SK-N-SH (cell line): ENCODE measurements at regions of chr9 and their contacts with region 1.

Region 1: GRCh38 chr9:126965541-126966428 is 51.2 kb downstream of the RALGPS1 start:
- DNase-seq: peak; percentile 73
- H3K4me3 ChIP-seq: no peak overlapping the region
- H3K27ac ChIP-seq: no peak overlapping the region
- H3K4me1 ChIP-seq: no peaks in the 10 kb centered on the region
- H3K27me3 ChIP-seq: no peaks in the 10 kb centered on the region
- CTCF ChIP-seq: peak; percentile 94
- EP300 ChIP-seq: no peak
- RAD21 ChIP-seq: peak; percentile 98

Region 2: GRCh38 chr9:126874546-126875311 is 91.1 kb before region 1 on chr9:
- CTCF ChIA-PET with region 1: no interaction called
- POLR2A ChIA-PET with region 1: no interaction called
- DNase-seq: no peak
- H3K4me3 ChIP-seq: no peak overlapping the region
- H3K27ac ChIP-seq: no peak overlapping the region
- H3K4me1 ChIP-seq: no peaks in the 10 kb centered on the region; a peak in 1 of 4 replicates
- H3K27me3 ChIP-seq: no peaks in the 10 kb centered on the region
- CTCF ChIP-seq: no peak
- EP300 ChIP-seq: no peak
- RAD21 ChIP-seq: no peak

Region 3: GRCh38 chr9:127130661-127131538 is 165.1 kb after region 1 on chr9:
- CTCF ChIA-PET with region 1: interaction called, 10 read pairs
- POLR2A ChIA-PET with region 1: no interaction called
- DNase-seq: peak; percentile 71
- H3K4me3 ChIP-seq: no peak overlapping the region
- H3K27ac ChIP-seq: peak overlapping the region in 1 of 2 experiments; percentile 58; a peak in 3 of 4 replicates
- H3K4me1 ChIP-seq: peaks cover 14 to 46% of the 10 kb centered on the region in 2 experiments; a peak in 3 of 4 replicates
- H3K27me3 ChIP-seq: no peaks in the 10 kb centered on the region
- CTCF ChIP-seq: no peak
- EP300 ChIP-seq: peak in 1 of 2 experiments; percentile 62; a peak in 1 of 4 replicates
- RAD21 ChIP-seq: no peak

Region 4: GRCh38 chr9:127142291-127142690 is 176.5 kb after region 1 on chr9:
- CTCF ChIA-PET with region 1: no interaction called
- POLR2A ChIA-PET with region 1: no interaction called
- DNase-seq: no peak
- H3K4me3 ChIP-seq: no peak overlapping the region
- H3K27ac ChIP-seq: no peak overlapping the region
- H3K4me1 ChIP-seq: no peaks in the 10 kb centered on the region; a peak in 1 of 4 replicates
- H3K27me3 ChIP-seq: no peaks in the 10 kb centered on the region
- CTCF ChIP-seq: no peak
- EP300 ChIP-seq: no peak
- RAD21 ChIP-seq: no peak

Region 5: GRCh38 chr9:127178686-127179632 is 213.2 kb after region 1 on chr9:
- CTCF ChIA-PET with region 1: interaction called, 11 read pairs
- POLR2A ChIA-PET with region 1: no interaction called
- DNase-seq: no peak
- H3K4me3 ChIP-seq: no peak overlapping the region
- H3K27ac ChIP-seq: no peak overlapping the region
- H3K4me1 ChIP-seq: peaks cover 0 to 12% of the 10 kb centered on the region in 2 experiments; a peak in 1 of 4 replicates
- H3K27me3 ChIP-seq: no peaks in the 10 kb centered on the region
- CTCF ChIP-seq: no peak
- EP300 ChIP-seq: no peak
- RAD21 ChIP-seq: no peak